PC-3 (cell line): ENCODE measurements at regions of chr10 and their contacts with region 1.

Region 1: DNA sequence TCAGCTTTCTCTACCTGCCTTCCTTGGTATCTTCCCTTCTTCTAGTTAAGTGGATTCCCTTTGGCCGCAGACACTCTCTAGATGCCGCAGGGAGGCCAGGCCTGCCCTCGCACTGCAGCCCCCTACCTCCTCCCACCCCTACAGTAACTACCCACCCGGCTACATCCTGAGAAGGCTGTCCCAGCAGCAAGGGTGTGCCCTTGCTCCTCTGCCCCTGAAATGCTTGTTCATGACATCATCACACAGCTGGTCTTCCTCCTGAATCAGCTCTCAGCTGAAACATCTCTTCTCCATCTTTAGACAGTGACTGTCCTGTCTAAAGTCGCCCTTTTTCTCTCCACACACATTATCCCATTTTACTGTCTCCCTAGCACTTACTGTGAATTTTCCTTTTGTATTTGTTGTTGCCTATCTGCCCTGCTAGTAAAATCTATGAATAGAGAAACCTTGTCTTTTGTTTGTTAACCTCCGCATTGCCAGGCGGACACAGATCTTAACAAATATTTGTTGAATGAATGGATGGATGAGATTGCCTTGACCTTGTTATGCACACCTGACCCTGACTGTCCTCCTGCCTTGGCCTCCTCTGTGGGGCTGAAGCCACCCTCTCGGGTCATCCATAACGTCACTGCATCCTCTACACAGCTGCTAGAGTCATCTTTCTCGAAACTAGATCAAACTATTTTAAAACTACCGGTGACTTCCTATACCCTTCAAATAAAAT is 108.9 kb upstream of the GATA3 start:
- DNase-seq: peak; percentile 37
- ATAC-seq: peak; percentile 14
- H3K4me3 ChIP-seq: no peak overlapping the region
- H3K27ac ChIP-seq: peak overlapping the region; percentile 88
- H3K4me1 ChIP-seq: peaks cover 52% of the 10 kb centered on the region
- H3K27me3 ChIP-seq: no peaks in the 10 kb centered on the region
- CTCF ChIP-seq: no peak

Region 2: DNA sequence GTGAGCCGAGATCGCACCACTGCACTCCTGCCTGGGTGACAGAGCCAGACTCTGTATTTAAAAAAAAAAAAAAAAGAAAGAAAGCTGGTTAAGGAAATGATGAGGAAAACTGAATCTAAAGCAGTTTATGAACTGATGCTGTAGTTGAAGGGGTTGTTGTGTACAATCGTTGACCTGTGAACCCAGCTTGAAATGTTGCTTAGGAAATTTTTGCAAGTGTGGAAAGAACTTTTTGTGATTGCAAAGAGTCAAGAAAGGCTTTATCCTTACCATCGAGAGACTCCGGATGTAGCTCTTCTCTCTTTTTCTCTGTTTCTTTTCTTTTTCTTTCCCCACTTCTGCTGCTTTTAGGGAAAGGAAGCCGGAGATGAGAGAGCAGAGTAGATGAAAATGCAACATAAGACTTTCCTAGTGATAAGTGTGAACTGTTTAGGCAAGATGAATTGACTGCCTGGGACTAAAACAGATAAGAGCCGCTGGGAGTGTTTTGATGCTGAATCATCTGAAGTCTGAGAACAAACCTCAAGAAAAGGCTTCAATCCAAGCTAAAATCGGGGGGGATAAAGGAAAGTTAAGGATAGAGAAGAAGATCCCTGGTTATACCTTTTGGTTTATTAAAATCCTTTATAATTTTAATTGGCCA is 58.3 kb before region 1 on chr10:
- CTCF ChIA-PET with region 1: no interaction called
- POLR2A ChIA-PET with region 1: no interaction called
- intact Hi-C with region 1: loop called (anchors 10 kb)
- DNase-seq: no peak
- ATAC-seq: no peak
- H3K4me3 ChIP-seq: no peak overlapping the region
- H3K27ac ChIP-seq: no peak overlapping the region
- H3K4me1 ChIP-seq: no peaks in the 10 kb centered on the region; the same call in 1 of the 2 replicates
- H3K27me3 ChIP-seq: no peaks in the 10 kb centered on the region
- CTCF ChIP-seq: no peak

Region 3: GRCh38 chr10:8006274-8006999 is 60.8 kb after region 1 on chr10:
- CTCF ChIA-PET with region 1: no interaction called
- POLR2A ChIA-PET with region 1: interaction called, 9 read pairs
- intact Hi-C with region 1: loop called (anchors 2 kb)
- DNase-seq: no peak
- ATAC-seq: no peak
- H3K4me3 ChIP-seq: no peak overlapping the region
- H3K27ac ChIP-seq: no peak overlapping the region
- H3K4me1 ChIP-seq: no peaks in the 10 kb centered on the region
- H3K27me3 ChIP-seq: no peaks in the 10 kb centered on the region
- CTCF ChIP-seq: no peak